Activated naive CD4-positive, alpha-beta T cell treated with anti-CD3 and anti-CD28 coated beads for 36 hours (primary cell): ENCODE measurements at regions of chr3 and their contacts with region 1.

Region 1: DNA sequence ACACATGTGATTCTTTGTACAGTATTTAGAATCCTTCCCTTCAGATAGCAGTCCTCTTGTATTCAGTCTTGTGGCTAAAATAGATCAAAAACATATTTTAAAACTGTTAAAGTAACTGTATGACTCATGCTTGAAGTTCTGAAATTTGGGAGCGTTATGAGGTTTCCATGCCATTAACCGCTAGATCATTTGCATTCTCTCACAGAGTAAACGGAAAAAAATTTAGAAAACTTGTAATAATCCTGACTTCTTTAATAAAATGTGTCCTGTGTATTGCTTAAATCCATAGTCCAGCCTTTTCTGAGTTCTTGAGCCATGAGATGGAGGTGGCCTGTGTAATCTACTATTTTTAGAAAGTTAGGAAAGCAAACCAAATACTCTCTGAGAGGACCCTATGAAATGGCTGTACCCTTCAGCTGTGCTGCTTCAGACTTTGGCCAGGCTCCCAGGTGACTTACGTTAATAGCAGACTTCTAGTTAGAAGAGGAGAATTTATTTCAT is 33.8 kb downstream of the MBNL1 start:
- DNase-seq: no peak
- H3K4me3 Mint-ChIP-seq: no peak overlapping the region
- H3K27ac Mint-ChIP-seq: peak overlapping the region; percentile 52
- H3K4me1 Mint-ChIP-seq: peaks cover 88% of the 10 kb centered on the region
- H3K27me3 Mint-ChIP-seq: no peaks in the 10 kb centered on the region

Region 2: GRCh38 chr3:152283501-152284376 is 18.8 kb before region 1 on chr3:
- CTCF ChIA-PET with region 1: interaction called, 4 read pairs
- intact Hi-C with region 1: loop called (anchors 2 kb)
- DNase-seq: no peak
- H3K4me3 Mint-ChIP-seq: peak overlapping the region; percentile 64
- H3K27ac Mint-ChIP-seq: peak overlapping the region; percentile 46
- H3K4me1 Mint-ChIP-seq: peaks cover 81% of the 10 kb centered on the region
- H3K27me3 Mint-ChIP-seq: no peaks in the 10 kb centered on the region

Region 3: GRCh38 chr3:152291649-152292066 is 10.9 kb before region 1 on chr3:
- CTCF ChIA-PET with region 1: interaction called, 3 read pairs
- intact Hi-C with region 1: loop called (anchors 1 kb)
- DNase-seq: no peak
- H3K4me3 Mint-ChIP-seq: peak overlapping the region; percentile 19
- H3K27ac Mint-ChIP-seq: peak overlapping the region; percentile 68
- H3K4me1 Mint-ChIP-seq: peaks cover 75% of the 10 kb centered on the region
- H3K27me3 Mint-ChIP-seq: no peaks in the 10 kb centered on the region